CD8-positive, alpha-beta memory T cell (primary cell): ENCODE measurements at regions of chr14 and their contacts with region 1.

Region 1: GRCh38 chr14:72948481-72949138 is 22.3 kb downstream of the DCAF4 start:
- DNase-seq: peak; percentile 21 to 73 (median 44)
- H3K4me3 ChIP-seq: no peak overlapping the region
- H3K4me3 Mint-ChIP-seq: no peak overlapping the region
- H3K27ac ChIP-seq: no peak overlapping the region
- H3K27ac Mint-ChIP-seq: peak overlapping the region in 1 of 8 donors; percentile 80
- H3K4me1 ChIP-seq: no peaks in the 10 kb centered on the region
- H3K4me1 Mint-ChIP-seq: peaks cover 0 to 11% (median 2%) of the 10 kb centered on the region in 3 donors
- H3K27me3 ChIP-seq: no peaks in the 10 kb centered on the region
- H3K27me3 Mint-ChIP-seq: no peaks in the 10 kb centered on the region

Region 2: DNA sequence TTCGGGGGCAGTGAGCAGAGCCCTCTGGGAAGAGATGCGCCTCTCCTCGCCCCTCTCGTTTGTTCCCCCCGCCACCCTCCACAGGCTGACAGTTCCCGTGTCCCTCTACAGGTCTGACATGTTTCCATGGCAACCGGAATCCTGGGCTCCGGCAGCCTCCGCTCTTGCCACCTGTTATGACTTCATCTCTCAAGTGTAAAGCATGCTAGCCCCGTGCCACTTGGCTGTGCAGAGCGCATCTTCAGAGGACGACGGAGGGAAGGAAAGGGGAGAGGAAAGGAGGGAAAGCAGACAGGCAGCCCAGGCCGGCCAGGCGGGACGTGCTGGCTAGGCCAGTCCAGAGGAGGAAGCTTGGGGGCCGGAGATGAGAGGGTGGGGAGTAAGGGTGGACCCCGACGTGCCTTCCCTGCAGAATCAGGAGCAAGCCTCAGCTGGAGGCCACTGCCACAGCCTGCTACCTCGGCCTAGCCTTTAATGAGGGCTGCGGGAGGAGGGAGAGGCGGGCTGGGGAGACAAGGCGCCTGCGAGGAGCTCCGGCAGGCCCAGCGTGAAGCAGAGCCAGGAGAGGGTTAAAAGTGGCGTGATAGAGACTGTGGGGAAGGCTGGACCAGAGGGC is 269.0 kb before region 1 on chr14:
- CTCF ChIA-PET with region 1: no interaction called
- POLR2A ChIA-PET with region 1: no interaction called
- DNase-seq: no peak
- H3K4me3 ChIP-seq: no peak overlapping the region
- H3K4me3 Mint-ChIP-seq: no peak overlapping the region
- H3K27ac ChIP-seq: no peak overlapping the region
- H3K27ac Mint-ChIP-seq: no peak overlapping the region
- H3K4me1 ChIP-seq: no peaks in the 10 kb centered on the region
- H3K4me1 Mint-ChIP-seq: no peaks in the 10 kb centered on the region
- H3K27me3 ChIP-seq: no peaks in the 10 kb centered on the region
- H3K27me3 Mint-ChIP-seq: peaks cover 3 to 5% of the 10 kb centered on the region in 2 donors

Region 3: DNA sequence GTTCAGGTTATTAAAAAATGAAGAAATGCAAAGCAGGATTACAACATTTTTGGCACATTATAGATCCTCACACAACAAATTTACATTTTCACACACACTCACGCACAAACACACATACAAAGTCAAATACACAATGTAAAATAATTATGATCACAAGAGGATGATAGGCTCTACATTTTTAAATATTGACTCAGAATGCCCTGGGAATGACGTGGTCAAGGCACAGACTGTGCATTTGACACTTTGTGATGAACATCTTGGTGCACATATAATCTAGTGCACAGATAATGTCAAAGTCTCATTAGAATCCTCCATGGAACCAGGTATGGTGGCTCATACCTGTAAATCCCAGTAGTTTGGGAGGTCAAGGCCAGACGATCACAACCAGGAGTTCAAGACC is 104.1 kb before region 1 on chr14:
- CTCF ChIA-PET with region 1: no interaction called
- POLR2A ChIA-PET with region 1: no interaction called
- DNase-seq: no peak
- H3K4me3 ChIP-seq: no peak overlapping the region
- H3K4me3 Mint-ChIP-seq: no peak overlapping the region
- H3K27ac ChIP-seq: no peak overlapping the region
- H3K27ac Mint-ChIP-seq: no peak overlapping the region
- H3K4me1 ChIP-seq: no peaks in the 10 kb centered on the region
- H3K4me1 Mint-ChIP-seq: no peaks in the 10 kb centered on the region
- H3K27me3 ChIP-seq: no peaks in the 10 kb centered on the region
- H3K27me3 Mint-ChIP-seq: peaks cover 2 to 6% of the 10 kb centered on the region in 2 donors

Region 4: DNA sequence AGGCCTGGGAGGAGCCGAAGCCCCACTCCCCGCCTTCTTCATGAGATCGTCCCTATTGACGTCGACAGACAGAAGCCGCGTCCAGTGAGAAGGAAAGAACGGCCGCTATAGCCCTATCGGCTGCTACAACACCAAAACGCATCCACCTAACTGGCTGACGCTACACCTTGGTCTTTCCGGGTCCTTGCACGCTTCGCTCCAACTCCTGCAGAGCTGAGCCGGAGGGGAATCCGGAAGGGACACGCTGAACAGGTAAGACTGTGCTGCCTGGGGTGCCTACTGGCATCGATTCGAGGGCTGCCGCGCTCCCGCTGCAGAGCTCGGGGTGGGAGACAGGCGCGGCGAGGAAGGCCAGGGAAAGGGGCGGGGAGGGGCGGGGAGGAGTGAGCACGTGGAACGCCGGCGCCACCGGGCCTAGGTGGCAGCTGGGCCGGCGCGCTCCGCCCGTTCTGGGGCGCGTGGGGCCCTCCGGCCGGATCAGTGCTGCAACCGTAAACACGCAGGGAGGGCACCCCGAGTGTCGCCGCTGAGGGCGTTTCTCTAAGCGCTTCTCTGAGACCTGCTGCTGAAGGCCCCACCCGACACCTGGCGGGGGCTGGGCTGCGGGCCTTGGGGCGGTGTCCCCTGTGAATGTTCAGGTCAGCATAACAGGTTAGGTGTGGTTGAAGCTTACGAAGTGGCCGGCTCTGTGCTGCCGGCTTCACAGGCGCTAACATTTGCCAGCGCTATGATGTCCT is 22.1 kb before region 1 on chr14 and contains the start of gene DCAF4:
- CTCF ChIA-PET with region 1: interaction called, 15 read pairs
- POLR2A ChIA-PET with region 1: no interaction called
- DNase-seq: peak; percentile 90 to 96 (median 92)
- H3K4me3 ChIP-seq: peak within 1 kb of the TSS; percentile 90
- H3K4me3 Mint-ChIP-seq: peak within 1 kb of the TSS; percentile 84 to 98 (median 94)
- H3K27ac ChIP-seq: peak within 1 kb of the TSS; percentile 81
- H3K27ac Mint-ChIP-seq: peak within 1 kb of the TSS; percentile 64 to 97 (median 92)
- H3K4me1 ChIP-seq: peaks cover 10% of the 10 kb centered on the region
- H3K4me1 Mint-ChIP-seq: peaks cover 12 to 23% (median 15%) of the 10 kb centered on the region in 3 donors
- H3K27me3 ChIP-seq: no peaks in the 10 kb centered on the region
- H3K27me3 Mint-ChIP-seq: peaks cover 4% of the 10 kb centered on the region in 2 donors
- total RNA-seq, gene DCAF4: 22.5 to 26.8 TPM

Region 5: GRCh38 chr14:73231981-73232851 is 283.6 kb after region 1 on chr14:
- CTCF ChIA-PET with region 1: no interaction called
- POLR2A ChIA-PET with region 1: no interaction called
- DNase-seq: no peak
- H3K4me3 ChIP-seq: no peak overlapping the region
- H3K4me3 Mint-ChIP-seq: no peak overlapping the region
- H3K27ac ChIP-seq: no peak overlapping the region
- H3K27ac Mint-ChIP-seq: no peak overlapping the region
- H3K4me1 ChIP-seq: no peaks in the 10 kb centered on the region
- H3K4me1 Mint-ChIP-seq: peaks cover 5 to 9% (median 7%) of the 10 kb centered on the region in 3 donors
- H3K27me3 ChIP-seq: peaks cover 32% of the 10 kb centered on the region
- H3K27me3 Mint-ChIP-seq: peaks cover 34 to 38% of the 10 kb centered on the region in 2 donors